PC-9 (cell line): ENCODE measurements at regions of chr20 and their contacts with region 1.

Region 1: GRCh38 chr20:492159-492558 is 29.8 kb upstream of the TBC1D20 start:
- DNase-seq: no peak
- H3K4me3 ChIP-seq: no peak overlapping the region
- H3K27ac ChIP-seq: no peak overlapping the region
- H3K4me1 ChIP-seq: peaks cover 16% of the 10 kb centered on the region
- H3K27me3 ChIP-seq: no peaks in the 10 kb centered on the region
- CTCF ChIP-seq: no peak

Region 2: GRCh38 chr20:400454-401275 is 91.5 kb before region 1 on chr20:
- CTCF ChIA-PET with region 1: no interaction called
- POLR2A ChIA-PET with region 1: no interaction called
- intact Hi-C with region 1: no loop called
- DNase-seq: no peak
- H3K4me3 ChIP-seq: no peak overlapping the region
- H3K27ac ChIP-seq: peak overlapping the region; percentile 96
- H3K4me1 ChIP-seq: peaks cover 28% of the 10 kb centered on the region
- H3K27me3 ChIP-seq: no peaks in the 10 kb centered on the region
- CTCF ChIP-seq: no peak

Region 3: DNA sequence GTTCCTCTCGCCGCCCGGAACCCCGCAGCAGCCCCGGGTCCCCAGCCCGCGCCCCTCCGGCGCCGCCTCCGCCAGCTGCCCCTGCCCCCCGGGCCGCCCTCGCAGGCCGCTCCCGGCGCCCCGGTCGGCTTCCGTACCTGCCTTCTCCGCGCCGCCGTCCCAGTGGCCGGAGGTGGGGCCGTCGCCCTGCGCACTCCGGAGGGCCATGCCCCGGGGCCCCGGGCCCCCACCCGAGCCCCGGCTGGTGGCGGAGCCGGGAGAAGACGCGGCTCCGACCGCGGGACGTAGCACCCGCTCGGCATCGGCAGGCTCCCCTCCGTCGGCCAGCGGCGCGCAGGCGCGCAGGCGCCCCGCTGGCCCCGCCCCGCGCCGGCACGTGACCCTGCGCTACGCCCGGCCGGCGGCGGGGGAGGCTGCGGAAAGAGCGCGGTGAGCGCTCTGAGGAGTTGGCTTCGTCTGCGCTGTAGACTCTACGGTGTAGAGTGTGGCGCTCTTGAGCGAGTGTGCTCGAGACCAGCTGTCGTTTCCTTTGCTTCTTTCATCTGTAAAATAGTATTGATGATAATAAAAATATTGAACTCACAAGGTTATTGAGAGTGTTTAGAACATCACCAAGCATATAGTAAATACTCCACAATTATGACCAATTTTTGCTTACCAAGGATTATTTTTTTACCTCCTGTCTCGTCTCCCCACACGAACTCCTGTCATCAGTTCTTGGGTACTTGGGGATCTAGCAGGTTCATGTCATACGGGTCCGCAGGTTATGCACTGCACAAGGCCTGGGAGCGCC is 29.8 kb before region 1 on chr20 and contains the start of gene TBC1D20:
- CTCF ChIA-PET with region 1: interaction called, 3 read pairs
- POLR2A ChIA-PET with region 1: interaction called, 10 read pairs
- intact Hi-C with region 1: no loop called
- DNase-seq: peak; percentile 63 to 83
- H3K4me3 ChIP-seq: peak within 1 kb of the TSS; percentile 100
- H3K27ac ChIP-seq: peak within 1 kb of the TSS; percentile 35
- H3K4me1 ChIP-seq: peaks cover 21% of the 10 kb centered on the region; the same call in 1 of the 2 replicates
- H3K27me3 ChIP-seq: peaks cover 4% of the 10 kb centered on the region; the same call in 1 of the 2 replicates
- CTCF ChIP-seq: no peak
- total RNA-seq, gene TBC1D20: 27.8 and 32.8 TPM in 2 replicates